ENCODE measurements at regions of chr15 and their contacts with region 1.

Region 1: GRCh38 chr15:72272213-72273002 is at the start of gene PARP6:
- DNase-seq: peak; percentile 95 to 99 (median 98)

Region 2: DNA sequence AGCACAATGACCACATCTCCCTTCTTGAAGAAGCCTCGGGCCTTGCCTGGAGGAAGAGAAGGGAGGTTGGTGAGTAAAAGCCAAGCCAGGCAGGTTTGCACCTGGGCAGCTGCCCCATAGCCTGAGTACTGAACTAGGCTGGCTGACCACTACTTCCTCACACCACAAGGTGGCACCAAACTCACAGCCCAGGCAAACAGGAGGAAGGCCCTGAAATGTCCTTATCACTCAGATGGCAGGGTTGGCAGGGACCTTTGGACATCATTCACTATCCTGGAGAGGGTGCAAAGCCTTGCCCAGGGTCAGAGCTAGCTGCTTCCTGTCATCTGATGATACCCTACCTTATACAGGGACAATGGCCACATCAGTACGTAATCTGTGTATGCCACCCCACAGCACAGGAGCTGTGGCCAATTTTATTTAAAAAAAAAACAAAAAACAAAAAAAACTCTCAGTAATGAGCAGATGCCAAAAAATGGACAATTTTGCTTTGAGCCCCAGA is 72.6 kb before region 1 on chr15:
- intact Hi-C with region 1: loop called (anchors 10 kb)
- DNase-seq: peak in 41 of 42 donors; percentile 61 to 92 (median 80)

Region 3: DNA sequence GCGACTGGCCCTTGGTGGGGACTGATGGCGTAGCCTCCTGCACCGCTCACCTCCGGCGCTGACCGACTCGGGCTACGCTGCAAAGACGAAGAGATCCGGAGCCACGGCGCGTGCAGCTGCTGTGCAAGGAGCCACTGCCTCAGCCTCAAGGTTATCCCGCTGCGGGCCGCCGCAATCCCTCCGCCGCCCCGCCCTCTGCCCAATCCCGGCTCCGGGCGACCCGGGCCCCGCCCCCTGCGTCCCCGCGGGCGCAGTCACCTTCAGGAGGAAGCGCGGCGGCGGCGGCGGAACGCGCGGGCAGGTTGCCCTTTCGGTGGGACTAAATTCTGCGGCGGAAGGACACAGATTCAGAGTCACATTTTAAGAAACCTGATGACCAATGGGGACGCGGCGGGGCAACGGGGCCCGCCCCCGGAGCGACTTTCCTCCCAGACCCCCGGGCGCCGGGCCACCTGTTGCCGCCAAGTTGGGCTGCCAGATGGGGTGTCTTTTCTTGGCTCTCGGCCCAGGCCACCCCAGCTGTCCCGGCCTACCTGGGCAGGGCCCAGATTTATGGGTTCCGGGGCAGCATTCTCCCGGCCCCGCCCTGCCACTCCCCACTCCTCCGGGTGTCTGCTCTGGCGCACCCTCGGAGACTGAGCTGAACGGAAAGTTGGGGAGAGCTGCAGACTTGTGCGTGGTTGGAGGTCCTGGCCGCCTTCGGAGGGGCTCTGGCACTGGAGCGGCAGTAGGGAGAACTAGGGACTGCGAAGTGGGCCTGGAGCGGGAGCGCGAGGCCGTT is 41.2 kb before region 1 on chr15 and contains the start of gene PKM:
- intact Hi-C with region 1: loop called (anchors 2 kb)
- DNase-seq: peak; percentile 75 to 97 (median 92)